ENCODE measurements at regions of chr1 and their contacts with region 1.

Region 1: DNA sequence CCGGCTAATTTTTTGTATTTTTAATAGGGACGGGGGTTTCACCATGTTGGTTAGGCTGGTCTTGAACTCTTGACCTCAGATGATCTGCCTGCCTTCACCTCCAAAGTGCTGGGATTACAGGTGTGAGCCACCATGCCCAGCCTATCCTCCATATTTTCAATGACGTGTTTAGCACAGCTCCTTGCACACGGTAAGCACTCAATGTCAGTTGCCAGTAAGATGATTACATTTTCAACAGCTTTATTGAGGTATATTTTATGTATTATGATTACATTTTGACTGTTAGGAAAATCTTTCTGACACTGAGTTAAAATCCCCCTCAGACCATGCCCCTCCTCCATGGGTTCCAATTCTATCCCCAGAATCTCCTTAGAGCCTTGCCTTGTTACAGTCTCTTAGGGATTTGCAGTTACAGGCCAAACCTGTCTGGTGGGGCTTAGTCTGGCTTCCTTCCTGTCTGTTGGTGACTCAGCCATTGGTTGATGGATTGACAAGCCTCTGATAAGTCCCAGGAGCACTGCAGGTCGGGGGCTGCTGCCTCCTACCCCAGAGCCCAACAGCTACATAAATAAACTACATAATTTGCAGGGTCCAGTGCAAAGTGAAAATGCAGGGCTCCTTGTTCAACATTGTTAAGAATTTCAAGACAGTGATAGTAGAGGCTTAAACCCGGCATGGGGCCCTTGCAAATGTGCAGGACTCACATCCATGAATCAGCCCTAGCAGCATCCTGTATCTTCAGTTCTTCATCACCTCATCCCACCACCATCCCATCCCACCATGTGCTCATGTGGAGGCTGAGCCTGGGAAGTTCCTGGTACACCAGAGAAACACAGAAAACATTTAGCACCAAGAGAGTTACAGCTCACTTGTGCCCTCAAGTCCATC is 23.4 kb downstream of the COA7 start:
- DNase-seq: no peak
- ATAC-seq: no peak
- H3K4me3 ChIP-seq: no peak overlapping the region
- H3K27ac ChIP-seq: peak overlapping the region; percentile 87 to 91 (median 90)
- H3K4me1 ChIP-seq: peaks cover 35 to 68% of the 10 kb centered on the region in 2 donors
- H3K27me3 ChIP-seq: no peaks in the 10 kb centered on the region
- CTCF ChIP-seq: no peak
- POLR2A ChIP-seq: no peak

Region 2: DNA sequence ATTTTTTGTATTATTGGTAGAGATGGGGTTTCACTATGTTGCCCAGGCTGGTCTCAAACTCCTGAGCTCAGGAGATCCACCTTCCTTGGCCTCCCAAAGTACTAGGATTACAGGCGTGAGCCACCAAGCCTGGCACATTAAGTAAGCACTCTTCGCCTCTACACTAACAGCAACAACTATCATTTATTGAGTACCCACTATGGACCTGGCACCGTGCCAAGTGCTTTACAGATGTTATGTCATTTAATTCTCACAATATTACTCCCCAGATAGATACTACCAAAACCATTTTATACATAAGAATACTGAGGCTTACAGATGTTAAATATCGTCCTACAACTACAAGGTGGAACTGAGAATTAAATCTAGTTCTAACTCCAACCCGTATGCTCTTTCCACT is 172.0 kb before region 1 on chr1:
- in situ Hi-C with region 1: no loop called
- intact Hi-C with region 1: no loop called
- DNase-seq: no peak
- ATAC-seq: no peak
- H3K4me3 ChIP-seq: no peak overlapping the region
- H3K27ac ChIP-seq: no peak overlapping the region
- H3K4me1 ChIP-seq: no peaks in the 10 kb centered on the region
- H3K27me3 ChIP-seq: no peaks in the 10 kb centered on the region
- CTCF ChIP-seq: no peak
- POLR2A ChIP-seq: no peak

Region 3: DNA sequence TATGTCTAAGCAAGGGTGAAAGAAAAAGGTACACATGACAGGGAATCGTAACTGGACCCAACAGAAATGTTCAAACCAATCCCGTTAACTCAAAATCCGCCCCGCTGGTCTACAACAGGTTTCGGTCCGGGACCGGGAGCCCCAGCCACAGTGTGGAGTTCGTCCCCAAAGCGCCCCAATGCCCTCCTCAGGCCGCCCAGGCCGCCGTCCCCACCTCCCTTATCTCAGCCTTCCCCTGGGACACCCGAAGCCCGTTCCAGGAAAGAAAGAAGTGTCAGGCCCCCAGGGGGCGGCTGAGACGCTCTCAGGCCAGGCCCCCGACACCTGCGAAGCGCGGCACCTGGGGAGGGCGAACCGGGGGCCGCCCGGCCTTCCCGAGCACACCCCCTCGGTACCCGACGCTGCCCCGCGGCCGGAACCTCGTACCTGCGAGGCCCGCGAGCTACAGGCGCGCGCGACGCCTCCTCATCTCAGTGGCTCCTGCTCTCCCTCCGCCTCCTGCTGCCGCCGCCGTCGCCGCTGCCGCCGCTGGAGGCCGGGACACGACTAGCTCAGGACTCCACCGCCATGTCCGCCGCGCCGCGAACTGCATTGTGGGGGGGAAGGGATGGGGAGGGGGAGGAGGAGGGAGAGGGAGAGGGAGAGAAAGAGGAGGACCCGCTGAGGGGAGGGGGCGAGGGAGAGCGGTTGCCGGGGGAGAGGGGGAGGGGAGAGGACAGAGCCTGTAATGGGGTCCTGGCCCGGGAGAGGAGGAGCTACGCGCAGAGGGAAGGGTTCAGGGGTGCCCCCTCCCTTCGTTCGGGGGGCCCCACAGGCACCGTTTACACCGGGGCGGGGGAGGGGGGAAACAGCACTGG is 122.0 kb before region 1 on chr1 and contains the start of gene TUT4:
- in situ Hi-C with region 1: no loop called
- intact Hi-C with region 1: loop called (anchors 2 kb)
- DNase-seq: peak; percentile 52 to 67
- ATAC-seq: peak; percentile 63 to 75
- H3K4me3 ChIP-seq: peak within 1 kb of the TSS; percentile 91 to 100 (median 96)
- H3K27ac ChIP-seq: peak within 1 kb of the TSS; percentile 97 to 99 (median 98)
- H3K4me1 ChIP-seq: peaks cover 34 to 35% of the 10 kb centered on the region in 2 donors
- H3K27me3 ChIP-seq: no peaks in the 10 kb centered on the region
- CTCF ChIP-seq: no peak
- POLR2A ChIP-seq: peak; percentile 51 to 53
- total RNA-seq, gene TUT4: 51.7 to 152 (median 67.5) TPM

Region 4: DNA sequence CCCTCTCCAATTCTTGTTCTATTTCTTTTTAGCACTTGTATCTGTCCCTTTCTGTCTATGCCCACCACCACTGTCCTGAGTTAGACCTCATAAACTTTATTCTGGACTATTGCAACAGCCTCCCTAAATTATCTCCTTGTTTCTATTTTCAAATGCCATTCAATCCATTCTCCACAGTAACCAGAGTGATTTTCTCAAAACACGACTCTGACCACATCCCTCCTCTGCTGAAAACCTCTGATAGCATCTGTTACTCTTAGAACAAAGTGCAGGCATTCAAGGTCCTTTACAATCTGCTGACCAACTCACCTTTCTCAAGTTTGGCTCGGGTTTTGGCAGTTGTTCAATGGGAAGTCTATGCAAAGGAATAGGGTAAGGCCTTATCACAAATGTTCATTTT is 95.3 kb before region 1 on chr1:
- in situ Hi-C with region 1: no loop called
- intact Hi-C with region 1: no loop called
- DNase-seq: no peak
- ATAC-seq: no peak
- H3K4me3 ChIP-seq: no peak overlapping the region
- H3K27ac ChIP-seq: no peak overlapping the region
- H3K4me1 ChIP-seq: no peaks in the 10 kb centered on the region
- H3K27me3 ChIP-seq: no peaks in the 10 kb centered on the region
- CTCF ChIP-seq: no peak
- POLR2A ChIP-seq: no peak

Region 5: DNA sequence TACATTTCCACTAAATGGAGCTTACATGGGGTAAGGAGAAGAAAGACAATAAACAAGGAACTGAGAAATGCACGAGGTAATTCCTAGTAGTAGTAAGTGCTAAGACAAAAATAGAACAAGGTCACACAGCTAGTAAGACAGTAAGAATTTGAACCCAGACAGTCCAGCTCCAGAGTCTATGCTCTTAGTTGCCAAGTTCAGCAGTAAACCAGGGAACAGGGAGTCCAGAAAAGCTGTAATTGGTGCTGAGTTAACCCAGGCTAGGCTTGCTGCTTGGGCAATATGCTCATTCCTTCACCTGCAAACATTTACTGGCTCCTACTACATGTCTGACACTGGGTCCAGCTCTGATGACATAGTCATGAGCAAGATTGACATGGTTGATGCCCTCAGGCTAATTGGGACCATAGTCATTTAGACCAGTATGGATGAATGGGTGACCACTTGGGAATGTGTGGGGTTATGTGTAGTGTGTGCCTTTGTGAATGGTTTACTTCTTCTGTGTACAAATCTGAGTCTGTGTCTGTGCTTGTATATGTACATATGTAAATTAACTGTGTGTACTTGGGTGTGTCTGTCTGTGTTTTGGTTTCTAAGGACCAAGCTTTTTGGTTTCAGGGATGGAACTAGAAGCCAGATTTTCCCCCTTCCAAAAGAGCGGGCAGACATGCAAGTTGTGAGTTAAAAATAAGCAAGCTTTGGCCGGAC is 70.5 kb before region 1 on chr1:
- in situ Hi-C with region 1: no loop called
- intact Hi-C with region 1: loop called (anchors 1 kb)
- DNase-seq: peak; percentile 60 to 69
- ATAC-seq: peak; percentile 75 to 83
- H3K4me3 ChIP-seq: peak overlapping the region in 1 of 4 donors; percentile 73
- H3K27ac ChIP-seq: peak overlapping the region; percentile 85 to 96 (median 92)
- H3K4me1 ChIP-seq: peaks cover 27 to 51% of the 10 kb centered on the region in 2 donors
- H3K27me3 ChIP-seq: no peaks in the 10 kb centered on the region
- CTCF ChIP-seq: no peak
- POLR2A ChIP-seq: no peak

Region 6: GRCh38 chr1:52662645-52663313 is 12.0 kb before region 1 on chr1:
- in situ Hi-C with region 1: no loop called
- intact Hi-C with region 1: loop called (anchors 2 kb)
- DNase-seq: no peak
- ATAC-seq: no peak
- H3K4me3 ChIP-seq: no peak overlapping the region
- H3K27ac ChIP-seq: peak overlapping the region in 2 of 4 donors; percentile 36 to 62
- H3K4me1 ChIP-seq: peaks cover 23 to 43% of the 10 kb centered on the region in 2 donors
- H3K27me3 ChIP-seq: no peaks in the 10 kb centered on the region
- CTCF ChIP-seq: no peak
- POLR2A ChIP-seq: no peak

Region 7: GRCh38 chr1:52726265-52727113 is 51.7 kb after region 1 on chr1 and contains the start of gene ZYG11B:
- in situ Hi-C with region 1: no loop called
- intact Hi-C with region 1: loop called (anchors 2 kb)
- DNase-seq: peak; percentile 83 to 88
- ATAC-seq: peak; percentile 87 to 89
- H3K4me3 ChIP-seq: peak within 1 kb of the TSS; percentile 75 to 90 (median 78)
- H3K27ac ChIP-seq: peak within 1 kb of the TSS; percentile 90 to 96 (median 94)
- H3K4me1 ChIP-seq: peaks cover 26 to 32% of the 10 kb centered on the region in 2 donors
- H3K27me3 ChIP-seq: no peaks in the 10 kb centered on the region
- CTCF ChIP-seq: no peak
- POLR2A ChIP-seq: peak; percentile 89 to 91
- total RNA-seq, gene ZYG11B: 136 to 248 (median 194) TPM